Naive thymus-derived CD4-positive, alpha-beta T cell (primary cell): ENCODE measurements at regions of chr16 and their contacts with region 1.

Region 1: DNA sequence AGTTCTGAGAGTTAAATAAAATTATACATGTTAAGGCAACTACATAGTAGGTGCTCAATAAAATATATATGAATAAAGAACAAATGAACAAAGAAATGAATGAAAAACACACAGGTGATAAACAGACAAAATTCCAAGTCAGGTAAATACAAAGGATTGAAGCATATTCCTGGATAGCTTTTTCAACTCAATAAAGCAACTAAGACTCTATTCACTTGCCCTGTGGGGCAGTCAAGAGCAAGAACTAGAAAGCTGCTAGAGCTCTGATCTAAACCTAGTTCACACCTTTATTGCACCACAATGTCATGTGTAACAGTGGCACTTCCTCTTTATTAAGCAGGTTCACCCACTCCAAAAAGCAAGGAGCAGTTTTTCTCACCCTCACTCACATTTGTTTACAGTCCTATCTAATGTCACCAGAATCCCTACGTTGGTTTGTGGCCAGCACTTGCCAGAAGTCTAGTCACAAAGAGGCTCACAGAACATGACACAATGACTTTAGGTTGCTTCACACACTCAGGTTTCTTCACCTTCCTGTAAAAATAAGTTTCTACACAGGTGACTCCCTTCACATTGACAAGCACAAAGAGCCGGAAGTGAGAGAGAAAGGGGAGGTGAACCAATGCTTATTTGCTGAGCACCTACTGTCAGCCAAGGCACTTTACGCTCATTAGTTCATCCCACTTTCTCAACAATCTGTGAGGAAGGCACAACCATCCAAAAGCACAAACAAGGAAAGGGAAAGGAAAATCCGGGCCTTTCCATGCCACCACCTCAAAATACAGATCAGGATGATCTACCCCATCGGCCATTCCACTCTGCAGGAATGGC is 70.8 kb downstream of the XPO6 start:
- DNase-seq: peak; percentile 15 to 96 (median 90)
- ATAC-seq: peak; percentile 84
- H3K4me3 ChIP-seq: peak overlapping the region; percentile 58
- H3K4me3 Mint-ChIP-seq: peak overlapping the region; percentile 75 to 93 (median 86)
- H3K27ac ChIP-seq: peak overlapping the region; percentile 77
- H3K27ac Mint-ChIP-seq: peak overlapping the region; percentile 95 to 99 (median 99)
- H3K4me1 ChIP-seq: peaks cover 87 to 91% of the 10 kb centered on the region in 2 donors
- H3K4me1 Mint-ChIP-seq: peaks cover 67 to 94% (median 87%) of the 10 kb centered on the region in 7 donors
- H3K27me3 ChIP-seq: no peaks in the 10 kb centered on the region
- H3K27me3 Mint-ChIP-seq: no peaks in the 10 kb centered on the region

Region 2: GRCh38 chr16:28121527-28121926 is 19.5 kb before region 1 on chr16:
- CTCF ChIA-PET with region 1: no interaction called
- POLR2A ChIA-PET with region 1: no interaction called
- intact Hi-C with region 1: no loop called
- DNase-seq: no peak
- ATAC-seq: no peak
- H3K4me3 ChIP-seq: no peak overlapping the region
- H3K4me3 Mint-ChIP-seq: no peak overlapping the region
- H3K27ac ChIP-seq: no peak overlapping the region
- H3K27ac Mint-ChIP-seq: peak overlapping the region; percentile 5 to 63 (median 21)
- H3K4me1 ChIP-seq: no peaks in the 10 kb centered on the region
- H3K4me1 Mint-ChIP-seq: peaks cover under 1 to 10% (median 4%) of the 10 kb centered on the region in 7 donors
- H3K27me3 ChIP-seq: no peaks in the 10 kb centered on the region
- H3K27me3 Mint-ChIP-seq: no peaks in the 10 kb centered on the region

Region 3: GRCh38 chr16:28158136-28158535 is 17.1 kb after region 1 on chr16:
- CTCF ChIA-PET with region 1: interaction called, 9 read pairs
- POLR2A ChIA-PET with region 1: interaction called, 17 read pairs
- intact Hi-C with region 1: no loop called
- DNase-seq: no peak
- ATAC-seq: peak; percentile 57
- H3K4me3 ChIP-seq: no peak overlapping the region
- H3K4me3 Mint-ChIP-seq: peak overlapping the region in 2 of 10 donors; percentile 27 to 48
- H3K27ac ChIP-seq: no peak overlapping the region
- H3K27ac Mint-ChIP-seq: peak overlapping the region in 8 of 9 donors; percentile 56 to 88 (median 65)
- H3K4me1 ChIP-seq: peaks cover 0 to 41% of the 10 kb centered on the region in 2 donors
- H3K4me1 Mint-ChIP-seq: peaks cover 54 to 94% (median 83%) of the 10 kb centered on the region in 7 donors
- H3K27me3 ChIP-seq: no peaks in the 10 kb centered on the region
- H3K27me3 Mint-ChIP-seq: no peaks in the 10 kb centered on the region

Region 4: DNA sequence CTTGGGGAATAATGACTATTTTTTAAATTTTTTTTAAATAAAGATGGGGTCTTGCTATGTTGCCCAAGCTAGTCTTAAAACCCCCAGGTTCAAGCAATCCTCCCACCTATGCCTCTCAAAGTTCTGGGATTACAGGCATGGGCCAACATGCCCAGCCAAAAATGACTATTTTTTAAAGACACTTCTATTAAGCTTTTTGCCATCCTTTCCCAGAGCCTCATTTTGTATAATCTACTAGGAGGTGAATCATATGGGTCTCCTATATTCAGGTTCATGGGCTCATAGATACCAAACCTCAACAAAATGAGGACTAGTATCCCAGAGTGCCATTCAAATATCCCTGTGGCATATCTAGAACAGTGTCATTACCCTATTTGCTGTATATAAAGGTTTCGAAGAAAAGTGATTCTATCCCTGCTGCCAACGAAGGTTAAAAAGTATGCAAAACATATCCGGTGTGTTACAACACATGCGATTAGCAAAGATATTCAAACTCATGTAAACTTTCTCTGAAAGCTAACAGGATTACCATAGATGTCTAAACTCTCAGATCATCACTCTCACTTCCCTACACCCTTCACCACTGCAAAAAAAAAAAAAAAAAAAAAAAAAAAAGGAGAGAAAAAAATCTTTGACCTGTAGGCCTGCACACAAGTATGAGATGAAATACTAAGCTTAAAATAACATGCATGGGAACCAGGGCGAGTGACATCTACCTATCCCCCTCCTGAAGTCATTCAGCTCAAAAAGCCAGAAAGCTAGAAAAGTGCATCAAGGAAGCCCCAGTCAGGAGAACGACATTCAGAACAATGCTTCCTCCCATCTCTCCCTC is 47.3 kb after region 1 on chr16:
- CTCF ChIA-PET with region 1: interaction called, 5 read pairs
- POLR2A ChIA-PET with region 1: interaction called, 25 read pairs
- intact Hi-C with region 1: loop called (anchors 1 kb)
- DNase-seq: no peak
- ATAC-seq: peak; percentile 10
- H3K4me3 ChIP-seq: peak overlapping the region; percentile 30
- H3K4me3 Mint-ChIP-seq: peak overlapping the region; percentile 64 to 81 (median 73)
- H3K27ac ChIP-seq: peak overlapping the region; percentile 66
- H3K27ac Mint-ChIP-seq: peak overlapping the region; percentile 75 to 95 (median 90)
- H3K4me1 ChIP-seq: peaks cover 64 to 79% of the 10 kb centered on the region in 2 donors
- H3K4me1 Mint-ChIP-seq: peaks cover 74 to 97% (median 91%) of the 10 kb centered on the region in 7 donors
- H3K27me3 ChIP-seq: no peaks in the 10 kb centered on the region
- H3K27me3 Mint-ChIP-seq: no peaks in the 10 kb centered on the region

Region 5: GRCh38 chr16:28218104-28218503 is 77.1 kb after region 1 on chr16:
- CTCF ChIA-PET with region 1: interaction called, 168 read pairs
- POLR2A ChIA-PET with region 1: interaction called, 92 read pairs
- intact Hi-C with region 1: loop called (anchors 1 kb)
- DNase-seq: peak in 8 of 9 donors; percentile 41 to 82 (median 72)
- ATAC-seq: peak; percentile 99
- H3K4me3 ChIP-seq: no peak overlapping the region
- H3K4me3 Mint-ChIP-seq: no peak overlapping the region
- H3K27ac ChIP-seq: no peak overlapping the region
- H3K27ac Mint-ChIP-seq: peak overlapping the region in 8 of 9 donors; percentile 13 to 84 (median 66)
- H3K4me1 ChIP-seq: peaks cover 0 to 5% of the 10 kb centered on the region in 2 donors
- H3K4me1 Mint-ChIP-seq: peaks cover 0 to 9% (median 6%) of the 10 kb centered on the region in 7 donors
- H3K27me3 ChIP-seq: no peaks in the 10 kb centered on the region
- H3K27me3 Mint-ChIP-seq: no peaks in the 10 kb centered on the region

Region 6: GRCh38 chr16:28301620-28302019 is 160.6 kb after region 1 on chr16:
- CTCF ChIA-PET with region 1: no interaction called
- POLR2A ChIA-PET with region 1: no interaction called
- intact Hi-C with region 1: no loop called
- DNase-seq: no peak
- ATAC-seq: no peak
- H3K4me3 ChIP-seq: no peak overlapping the region
- H3K4me3 Mint-ChIP-seq: no peak overlapping the region
- H3K27ac ChIP-seq: no peak overlapping the region
- H3K27ac Mint-ChIP-seq: peak overlapping the region in 6 of 9 donors; percentile 24 to 86 (median 76)
- H3K4me1 ChIP-seq: peaks cover 39% of the 10 kb centered on the region in 2 donors
- H3K4me1 Mint-ChIP-seq: peaks cover 21 to 86% (median 72%) of the 10 kb centered on the region in 7 donors
- H3K27me3 ChIP-seq: no peaks in the 10 kb centered on the region
- H3K27me3 Mint-ChIP-seq: no peaks in the 10 kb centered on the region

Region 7: GRCh38 chr16:28317040-28317880 is 176.3 kb after region 1 on chr16:
- CTCF ChIA-PET with region 1: interaction called, 7 read pairs
- POLR2A ChIA-PET with region 1: no interaction called
- intact Hi-C with region 1: loop called in 1 of 2 experiments (anchors 2 kb)
- DNase-seq: peak; percentile 45 to 82 (median 64)
- ATAC-seq: peak; percentile 84
- H3K4me3 ChIP-seq: no peak overlapping the region
- H3K4me3 Mint-ChIP-seq: peak overlapping the region in 7 of 10 donors; percentile 13 to 63 (median 38)
- H3K27ac ChIP-seq: peak overlapping the region; percentile 38
- H3K27ac Mint-ChIP-seq: peak overlapping the region; percentile 33 to 90 (median 82)
- H3K4me1 ChIP-seq: peaks cover 25 to 30% of the 10 kb centered on the region in 2 donors
- H3K4me1 Mint-ChIP-seq: peaks cover 8 to 49% (median 28%) of the 10 kb centered on the region in 7 donors
- H3K27me3 ChIP-seq: no peaks in the 10 kb centered on the region
- H3K27me3 Mint-ChIP-seq: no peaks in the 10 kb centered on the region

Region 8: DNA sequence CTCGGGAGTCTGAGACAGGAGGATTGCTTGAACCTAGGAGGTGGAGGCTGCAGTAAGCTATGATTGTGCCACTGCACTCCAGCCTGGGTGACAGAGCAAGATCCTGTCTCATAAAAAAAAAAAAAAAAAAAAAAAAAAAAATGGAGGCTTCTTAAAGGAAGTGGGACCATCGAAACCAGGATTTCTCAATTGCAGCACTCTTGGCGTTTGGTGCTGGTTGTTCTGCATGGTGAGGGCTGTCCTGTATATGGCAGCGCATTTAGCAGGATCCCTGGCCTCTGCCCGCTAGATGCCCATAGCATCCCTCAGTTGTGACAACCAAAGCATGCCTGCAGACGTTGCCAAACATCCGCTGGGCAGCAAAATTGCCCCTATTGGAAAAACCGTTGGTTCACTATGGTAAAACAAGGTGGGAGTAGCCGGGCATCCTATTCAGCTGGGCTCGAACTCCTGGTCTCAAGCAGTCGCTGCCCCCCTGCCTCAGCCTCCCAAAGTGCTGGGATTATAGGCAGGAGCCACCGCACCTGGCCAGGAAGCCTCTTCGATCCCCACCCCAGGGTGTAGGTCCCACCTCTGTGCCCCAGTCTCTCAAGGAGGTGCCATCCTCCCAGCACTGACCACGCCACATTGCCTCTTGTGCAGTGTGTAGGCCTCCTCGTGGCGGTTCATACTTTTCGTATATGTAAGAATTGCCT is 337.6 kb after region 1 on chr16:
- CTCF ChIA-PET with region 1: no interaction called
- POLR2A ChIA-PET with region 1: no interaction called
- intact Hi-C with region 1: no loop called
- DNase-seq: peak in 1 of 9 donors; percentile 12
- ATAC-seq: no peak
- H3K4me3 ChIP-seq: no peak overlapping the region
- H3K4me3 Mint-ChIP-seq: no peak overlapping the region
- H3K27ac ChIP-seq: no peak overlapping the region
- H3K27ac Mint-ChIP-seq: peak overlapping the region in 3 of 9 donors; percentile 20 to 31 (median 22)
- H3K4me1 ChIP-seq: no peaks in the 10 kb centered on the region
- H3K4me1 Mint-ChIP-seq: peaks cover 0 to 10% (median 2%) of the 10 kb centered on the region in 7 donors
- H3K27me3 ChIP-seq: no peaks in the 10 kb centered on the region
- H3K27me3 Mint-ChIP-seq: no peaks in the 10 kb centered on the region